Lower leg skin (tissue), 4 donors: ENCODE measurements at regions of chr2 and their contacts with region 1.

Region 1: DNA sequence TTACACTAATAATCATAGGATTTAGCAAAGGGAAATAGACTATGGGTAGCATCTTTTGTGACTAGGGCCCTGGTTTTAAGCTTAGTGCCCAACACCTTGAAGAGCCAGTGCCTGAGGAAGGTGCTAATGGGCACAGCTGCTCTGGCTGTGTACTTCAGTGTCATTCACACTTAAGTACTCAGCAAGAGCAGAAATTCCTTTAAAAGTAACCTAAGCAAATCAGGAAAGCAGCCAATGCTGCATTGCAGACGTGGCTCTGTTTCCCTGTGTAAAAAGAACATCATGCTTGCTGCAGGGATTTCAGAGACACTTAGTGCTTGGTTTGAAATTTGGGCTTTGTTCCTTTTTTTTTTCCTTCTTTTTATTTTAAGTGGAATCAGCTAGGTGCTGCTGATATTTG is 505.4 kb downstream of the SUCLG1 start:
- DNase-seq: no peak
- H3K4me3 ChIP-seq: no peak overlapping the region
- CTCF ChIP-seq: no peak
- POLR2A ChIP-seq: no peak

Region 2: DNA sequence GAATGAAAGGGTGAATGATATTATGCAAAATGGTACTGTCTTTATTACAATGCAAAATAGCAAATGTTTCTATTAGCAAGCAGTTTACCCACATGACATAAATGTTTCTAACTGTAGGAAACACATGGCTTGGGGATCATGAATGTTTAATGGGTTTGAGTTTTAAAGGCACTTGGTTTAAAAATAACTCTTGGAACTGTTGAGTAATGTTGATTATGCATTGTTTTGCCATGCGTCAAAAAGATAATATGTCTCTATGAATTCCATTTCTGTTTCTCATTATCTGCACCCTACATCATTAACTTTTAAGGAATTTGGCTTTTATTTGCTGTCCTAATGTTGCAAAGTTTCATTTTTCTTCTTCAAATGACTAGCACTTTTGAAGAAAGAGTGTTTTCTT is 850.1 kb before region 1 on chr2:
- intact Hi-C with region 1: loop called (anchors 5 kb)
- DNase-seq: no peak
- H3K4me3 ChIP-seq: no peak overlapping the region
- CTCF ChIP-seq: no peak
- POLR2A ChIP-seq: no peak

Region 3: GRCh38 chr2:84052043-84052442 is 98.3 kb after region 1 on chr2:
- intact Hi-C with region 1: no loop called
- DNase-seq: no peak
- H3K4me3 ChIP-seq: no peak overlapping the region
- CTCF ChIP-seq: no peak
- POLR2A ChIP-seq: no peak

Region 4: GRCh38 chr2:84137034-84137433 is 183.3 kb after region 1 on chr2:
- intact Hi-C with region 1: no loop called
- DNase-seq: no peak
- H3K4me3 ChIP-seq: no peak overlapping the region
- CTCF ChIP-seq: no peak
- POLR2A ChIP-seq: no peak